ENCODE measurements at regions of chr11 and their contacts with region 1.

Region 1: GRCh38 chr11:25441421-25441820 is 890.5 kb upstream of the ANO3 start:
- DNase-seq: no peak
- H3K4me3 ChIP-seq: no peak overlapping the region
- H3K27ac ChIP-seq: no peak overlapping the region
- H3K4me1 ChIP-seq: no peaks in the 10 kb centered on the region
- H3K27me3 ChIP-seq: no peaks in the 10 kb centered on the region
- CTCF ChIP-seq: no peak

Region 2: GRCh38 chr11:25039165-25039564 is 402.3 kb before region 1 on chr11:
- CTCF ChIA-PET with region 1: no interaction called
- POLR2A ChIA-PET with region 1: interaction called, 10 read pairs
- intact Hi-C with region 1: no loop called
- DNase-seq: no peak
- H3K4me3 ChIP-seq: no peak overlapping the region
- H3K27ac ChIP-seq: no peak overlapping the region
- H3K4me1 ChIP-seq: no peaks in the 10 kb centered on the region
- H3K27me3 ChIP-seq: no peaks in the 10 kb centered on the region
- CTCF ChIP-seq: no peak

Region 3: GRCh38 chr11:25183411-25183810 is 258.0 kb before region 1 on chr11:
- CTCF ChIA-PET with region 1: no interaction called
- POLR2A ChIA-PET with region 1: no interaction called
- intact Hi-C with region 1: no loop called
- DNase-seq: no peak
- H3K4me3 ChIP-seq: no peak overlapping the region
- H3K27ac ChIP-seq: no peak overlapping the region
- H3K4me1 ChIP-seq: no peaks in the 10 kb centered on the region
- H3K27me3 ChIP-seq: no peaks in the 10 kb centered on the region
- CTCF ChIP-seq: no peak

Region 4: DNA sequence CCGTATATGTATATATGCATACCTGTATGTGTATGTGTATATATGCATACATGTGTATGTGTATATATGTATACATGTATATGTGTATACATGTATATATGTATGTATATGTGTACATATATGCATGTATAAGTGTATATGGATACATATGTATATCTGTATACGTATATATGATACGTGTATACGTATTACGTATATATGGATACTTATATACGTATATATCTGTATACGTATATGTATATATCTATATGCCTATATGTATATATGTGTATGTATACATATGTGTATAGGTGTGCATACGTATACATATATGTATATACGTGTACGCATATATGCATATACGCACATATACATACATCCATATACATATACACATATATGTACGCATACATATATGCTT is 208.9 kb after region 1 on chr11:
- CTCF ChIA-PET with region 1: no interaction called
- POLR2A ChIA-PET with region 1: interaction called, 12 read pairs
- intact Hi-C with region 1: no loop called
- DNase-seq: no peak
- H3K4me3 ChIP-seq: no peak overlapping the region
- H3K27ac ChIP-seq: no peak overlapping the region
- H3K4me1 ChIP-seq: no peaks in the 10 kb centered on the region
- H3K27me3 ChIP-seq: no peaks in the 10 kb centered on the region
- CTCF ChIP-seq: no peak